ENCODE measurements at regions of chr4 and their contacts with region 1.

Region 1: GRCh38 chr4:98467627-98468072 is 190.8 kb downstream of the TSPAN5 start:
- DNase-seq: peak; percentile 40 to 77
- ATAC-seq: peak; percentile 87 to 95 (median 91)
- H3K4me3 ChIP-seq: peak overlapping the region; percentile 24 to 53 (median 44)
- H3K27ac ChIP-seq: no peak overlapping the region
- H3K4me1 ChIP-seq: peaks cover 0 to 28% (median 17%) of the 10 kb centered on the region in 9 donors
- H3K27me3 ChIP-seq: no peaks in the 10 kb centered on the region
- CTCF ChIP-seq: peak; percentile 36 to 86 (median 75)

Region 2: GRCh38 chr4:98639523-98639922 is 171.9 kb after region 1 on chr4:
- intact Hi-C with region 1: loop called in 1 of 10 experiments (anchors 10 kb)
- DNase-seq: no peak
- ATAC-seq: no peak
- H3K4me3 ChIP-seq: peak overlapping the region in 1 of 10 donors; percentile 16
- H3K27ac ChIP-seq: peak overlapping the region in 1 of 10 donors; percentile 4
- H3K4me1 ChIP-seq: peaks cover 0 to 11% (median 0%) of the 10 kb centered on the region in 9 donors
- H3K27me3 ChIP-seq: no peaks in the 10 kb centered on the region
- CTCF ChIP-seq: no peak

Region 3: GRCh38 chr4:98838977-98839618 is 371.4 kb after region 1 on chr4:
- intact Hi-C with region 1: loop called in 1 of 10 experiments (anchors 10 kb)
- DNase-seq: peak in 1 of 2 donors; percentile 26
- ATAC-seq: peak; percentile 63 to 97 (median 83)
- H3K4me3 ChIP-seq: peak overlapping the region in 2 of 10 donors; percentile 10 to 17
- H3K27ac ChIP-seq: peak overlapping the region in 7 of 10 donors; percentile 3 to 52 (median 41)
- H3K4me1 ChIP-seq: peaks cover 0 to 9% (median 0%) of the 10 kb centered on the region in 9 donors
- H3K27me3 ChIP-seq: no peaks in the 10 kb centered on the region
- CTCF ChIP-seq: peak in 3 of 9 donors; percentile 23 to 33 (median 32)

Region 4: GRCh38 chr4:98939892-98940298 is 472.2 kb after region 1 on chr4:
- intact Hi-C with region 1: loop called in 3 of 10 experiments (anchors 5 to 10 kb)
- DNase-seq: no peak
- ATAC-seq: peak in 5 of 8 donors; percentile 42 to 62 (median 53)
- H3K4me3 ChIP-seq: no peak overlapping the region
- H3K27ac ChIP-seq: no peak overlapping the region
- H3K4me1 ChIP-seq: no peaks in the 10 kb centered on the region
- H3K27me3 ChIP-seq: no peaks in the 10 kb centered on the region
- CTCF ChIP-seq: peak; percentile 37 to 81 (median 73)

Region 5: DNA sequence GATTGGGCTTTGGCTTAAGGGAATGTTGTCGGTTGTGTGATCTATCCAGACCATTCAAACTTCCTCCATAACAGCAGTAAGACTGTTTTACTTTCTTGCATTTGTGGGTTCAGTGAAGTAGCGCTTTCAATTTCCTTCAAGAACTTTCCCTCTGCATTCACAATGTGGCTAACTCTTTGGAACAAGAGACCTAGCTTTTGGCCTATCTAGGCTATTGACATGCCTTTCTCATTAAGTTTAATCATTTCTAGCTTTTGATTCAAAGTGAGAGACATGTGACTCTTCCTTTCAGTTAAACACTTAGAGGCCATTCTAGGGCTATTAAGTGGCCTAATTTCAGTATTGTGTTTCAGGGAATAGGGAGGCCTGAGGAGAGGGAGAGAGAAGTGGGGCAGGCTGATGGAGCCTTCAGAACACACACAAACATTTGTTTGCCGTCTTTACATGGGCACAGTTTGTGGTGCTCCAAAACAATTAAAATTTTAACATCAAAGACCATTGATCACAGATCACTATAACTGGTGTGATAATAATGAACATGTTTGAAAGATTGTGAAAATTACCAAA is 586.9 kb after region 1 on chr4:
- intact Hi-C with region 1: loop called in 4 of 10 experiments (anchors 10 kb)
- DNase-seq: no peak
- ATAC-seq: no peak
- H3K4me3 ChIP-seq: no peak overlapping the region
- H3K27ac ChIP-seq: no peak overlapping the region
- H3K4me1 ChIP-seq: peaks cover 0 to 24% (median 9%) of the 10 kb centered on the region in 9 donors
- H3K27me3 ChIP-seq: no peaks in the 10 kb centered on the region
- CTCF ChIP-seq: no peak

Region 6: GRCh38 chr4:99462875-99463464 is 995.3 kb after region 1 on chr4:
- intact Hi-C with region 1: loop called in 1 of 10 experiments (anchors 5 kb)
- DNase-seq: peak in 1 of 2 donors; percentile 34
- ATAC-seq: peak in 7 of 8 donors; percentile 69 to 90 (median 75)
- H3K4me3 ChIP-seq: no peak overlapping the region
- H3K27ac ChIP-seq: no peak overlapping the region
- H3K4me1 ChIP-seq: no peaks in the 10 kb centered on the region
- H3K27me3 ChIP-seq: peaks cover 0 to 19% (median 0%) of the 10 kb centered on the region in 7 donors
- CTCF ChIP-seq: peak; percentile 53 to 85 (median 77)

Measured in heart right ventricle (tissue), 16 donors.